ENCODE measurements at regions of chr7 and their contacts with region 1.

Region 1: GRCh38 chr7:47435889-47436312 is 146.0 kb downstream of the TNS3 start:
- DNase-seq: no peak
- ATAC-seq: peak; percentile 89

Region 2: GRCh38 chr7:47273974-47274766 is 161.7 kb before region 1 on chr7:
- intact Hi-C with region 1: no loop called
- DNase-seq: no peak
- ATAC-seq: no peak

Region 3: GRCh38 chr7:47581806-47582763 is 146.2 kb after region 1 on chr7 and contains the start of gene TNS3:
- intact Hi-C with region 1: loop called (anchors 5 kb)
- DNase-seq: peak; percentile 73
- ATAC-seq: peak; percentile 70
- total RNA-seq, gene TNS3: 44.8 TPM